ENCODE measurements at regions of chr2 and their contacts with region 1.

Region 1: DNA sequence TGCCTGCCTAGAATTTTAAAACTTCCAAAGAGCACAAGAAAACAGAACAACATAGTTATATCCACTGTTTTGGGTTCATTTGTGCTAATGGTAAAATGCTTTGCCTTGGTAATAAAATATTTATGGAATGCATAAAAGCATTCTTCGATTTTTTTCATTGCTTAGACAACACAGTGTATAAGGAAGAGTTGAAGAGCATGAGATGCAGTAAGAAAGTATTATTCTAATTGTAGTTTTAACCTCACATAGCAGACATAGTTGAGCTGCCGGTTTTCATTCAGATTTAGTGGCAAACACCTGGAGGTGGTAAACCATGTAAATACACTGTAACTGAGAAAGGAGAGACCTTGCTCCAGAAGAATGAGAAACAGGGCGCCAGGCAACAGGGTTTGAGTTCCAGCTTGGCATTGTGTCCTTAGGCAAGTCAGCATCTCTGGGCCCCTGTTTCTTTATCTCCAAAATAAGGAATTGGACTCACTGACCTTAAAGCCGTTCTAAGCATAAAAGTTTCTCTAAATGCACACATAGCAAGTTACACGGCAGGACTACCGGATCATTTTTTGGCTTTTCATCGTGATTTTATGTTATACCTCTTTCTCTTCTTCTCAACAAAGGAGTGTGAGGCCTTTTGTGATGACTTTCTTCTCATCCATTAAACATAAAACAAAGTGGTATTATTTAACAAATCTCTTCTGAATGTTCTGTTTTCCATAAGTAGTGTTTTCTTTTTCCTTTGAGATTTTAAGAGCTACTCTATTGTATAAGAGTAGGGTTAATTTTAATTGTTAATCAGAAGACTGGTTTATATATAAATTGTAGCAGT is 7.9 kb downstream of the UGP2 start:
- DNase-seq: peak in 1 of 2 experiments; percentile 34
- H3K4me3 ChIP-seq: no peak overlapping the region
- H3K27ac ChIP-seq: peak overlapping the region; percentile 13; the same call in 1 of the 2 replicates
- H3K4me1 ChIP-seq: no peaks in the 10 kb centered on the region
- H3K27me3 ChIP-seq: no peaks in the 10 kb centered on the region
- CTCF ChIP-seq: no peak

Region 2: DNA sequence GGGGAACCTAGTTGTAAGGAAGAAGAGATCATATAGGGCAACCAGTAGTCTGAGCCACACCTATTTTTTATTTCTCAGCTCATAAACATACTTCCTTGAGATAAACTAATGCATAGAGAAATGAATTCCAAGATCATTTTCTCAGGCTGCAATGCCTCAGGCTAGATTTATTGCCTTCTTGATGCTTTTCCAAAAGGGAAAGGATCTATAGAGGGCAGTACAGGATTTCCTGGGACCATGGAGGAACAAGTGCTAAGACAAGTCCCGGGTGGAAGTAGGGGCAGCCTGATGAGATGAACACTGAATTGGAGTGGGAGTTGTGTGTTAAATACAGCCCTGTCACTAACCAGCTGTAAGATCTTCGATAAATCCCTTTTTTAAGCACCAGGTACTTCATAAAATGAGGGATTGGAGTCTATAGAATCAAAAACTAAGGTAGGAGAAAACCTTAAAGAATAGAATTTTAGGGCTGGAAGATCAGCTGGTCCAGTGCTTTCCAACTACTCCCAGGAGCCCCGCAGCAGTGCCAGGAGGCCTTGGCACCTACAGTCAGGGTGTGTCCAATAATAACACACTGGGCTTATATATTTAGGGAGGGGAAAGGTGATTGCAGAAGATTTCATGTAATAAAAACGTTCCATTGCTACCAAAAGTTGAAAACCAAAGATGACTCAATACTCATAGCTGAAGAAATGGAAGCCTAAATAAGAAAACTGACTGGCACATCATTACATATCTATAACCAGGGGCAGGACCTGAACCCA is 746.0 kb after region 1 on chr2:
- CTCF ChIA-PET with region 1: no interaction called
- POLR2A ChIA-PET with region 1: interaction called, 12 read pairs
- intact Hi-C with region 1: no loop called
- DNase-seq: peak in 1 of 2 experiments; percentile 55
- H3K4me3 ChIP-seq: no peak overlapping the region
- H3K27ac ChIP-seq: 0 out of 2 replicates have a peak overlapping the region, but pooled peaks have one; percentile 44
- H3K4me1 ChIP-seq: peaks cover 32% of the 10 kb centered on the region
- H3K27me3 ChIP-seq: no peaks in the 10 kb centered on the region
- CTCF ChIP-seq: no peak; the same call in 1 of the 2 replicates

Measured in PC-9 (cell line).